PC-9 (cell line): ENCODE measurements at regions of chr6 and their contacts with region 1.

Region 1: DNA sequence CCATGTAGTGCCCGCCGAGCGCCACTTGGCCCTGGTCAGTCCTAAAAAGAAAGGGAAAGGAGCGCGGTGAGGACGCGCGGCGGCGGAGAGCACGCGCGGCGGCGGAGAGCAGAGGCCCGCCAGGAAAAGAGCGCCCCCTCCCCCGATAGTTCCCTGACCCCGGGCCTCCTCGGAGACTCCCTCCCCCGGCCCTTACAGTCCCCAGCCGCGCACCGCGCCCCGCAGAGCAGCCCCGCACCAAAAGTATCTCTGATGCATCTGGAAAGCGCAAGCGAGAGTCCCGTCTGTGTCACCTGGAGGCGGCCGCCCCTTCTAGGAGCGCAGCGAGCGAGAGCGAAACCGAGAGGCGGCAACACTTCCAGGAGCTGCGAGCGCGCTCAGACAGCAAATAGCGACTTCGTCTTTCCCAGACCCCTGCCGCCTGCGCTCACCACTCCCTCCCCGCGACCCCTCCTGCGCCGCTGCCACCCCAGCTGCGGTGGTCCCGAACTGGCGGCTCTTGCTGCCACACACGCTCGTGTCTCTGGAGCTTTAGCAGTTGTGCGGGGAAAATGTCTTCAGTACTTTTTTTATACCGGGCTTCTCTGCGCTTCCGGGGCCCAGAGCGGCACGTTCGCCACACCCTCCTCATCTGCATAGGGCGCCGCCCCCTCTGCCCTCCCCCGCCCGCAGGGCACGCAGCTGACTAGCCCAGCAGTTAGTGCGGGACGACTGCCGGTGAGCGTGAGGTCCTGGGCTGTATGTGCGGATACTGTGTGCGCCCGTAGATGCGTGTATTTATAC is at the start of gene TENT5A:
- DNase-seq: peak; percentile 74 to 87
- H3K4me3 ChIP-seq: peak within 1 kb of the TSS; percentile 88
- H3K27ac ChIP-seq: peak within 1 kb of the TSS; percentile 72
- H3K4me1 ChIP-seq: 0 out of 2 replicates have a peak, but pooled peaks cover 4% of the 10 kb centered on the region
- H3K27me3 ChIP-seq: no peaks in the 10 kb centered on the region
- CTCF ChIP-seq: no peak
- total RNA-seq, gene TENT5A: 2.0 and 2.2 TPM in 2 replicates

Region 2: DNA sequence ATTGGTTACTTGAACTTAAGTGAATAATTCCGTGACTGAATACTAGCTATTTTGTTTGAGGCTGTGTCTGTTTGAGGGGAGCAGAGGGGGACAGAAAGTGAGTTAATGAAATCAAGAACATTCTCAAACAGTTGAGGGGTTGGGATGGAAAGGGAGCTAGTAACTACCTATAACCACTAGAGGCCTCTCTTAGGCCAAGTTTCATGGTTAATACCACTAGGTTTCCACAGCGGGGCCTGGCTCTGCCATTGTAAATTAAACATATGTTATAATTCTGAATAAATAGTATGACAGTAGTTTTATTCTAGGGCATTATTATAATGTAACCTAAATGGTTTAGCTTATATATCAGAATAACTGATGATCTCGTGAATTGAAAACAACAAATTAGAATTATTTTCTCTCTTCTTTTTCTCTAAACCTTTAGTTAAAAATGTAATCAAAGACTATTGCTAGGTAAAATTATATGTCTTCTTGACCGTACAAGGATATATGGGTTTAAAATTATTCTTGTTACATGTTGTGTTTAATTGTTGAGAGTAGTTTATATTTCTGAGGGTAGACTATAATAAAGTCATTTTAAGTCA is 1537.8 kb before region 1 on chr6:
- CTCF ChIA-PET with region 1: interaction called, 3 read pairs
- POLR2A ChIA-PET with region 1: no interaction called
- intact Hi-C with region 1: loop called (anchors 1 kb)
- DNase-seq: peak in 1 of 2 experiments; percentile 7
- H3K4me3 ChIP-seq: no peak overlapping the region
- H3K27ac ChIP-seq: no peak overlapping the region
- H3K4me1 ChIP-seq: 0 out of 2 replicates have a peak, but pooled peaks cover 7% of the 10 kb centered on the region
- H3K27me3 ChIP-seq: no peaks in the 10 kb centered on the region
- CTCF ChIP-seq: peak; percentile 73

Region 3: GRCh38 chr6:80742481-80742880 is 1009.8 kb before region 1 on chr6:
- CTCF ChIA-PET with region 1: no interaction called
- POLR2A ChIA-PET with region 1: no interaction called
- intact Hi-C with region 1: loop called (anchors 2 kb)
- DNase-seq: no peak
- H3K4me3 ChIP-seq: no peak overlapping the region
- H3K27ac ChIP-seq: no peak overlapping the region
- H3K4me1 ChIP-seq: no peaks in the 10 kb centered on the region
- H3K27me3 ChIP-seq: no peaks in the 10 kb centered on the region
- CTCF ChIP-seq: peak; percentile 56

Region 4: GRCh38 chr6:81562169-81562568 is 190.2 kb before region 1 on chr6:
- CTCF ChIA-PET with region 1: no interaction called
- POLR2A ChIA-PET with region 1: no interaction called
- intact Hi-C with region 1: loop called (anchors 10 kb)
- DNase-seq: no peak
- H3K4me3 ChIP-seq: no peak overlapping the region
- H3K27ac ChIP-seq: no peak overlapping the region
- H3K4me1 ChIP-seq: peaks cover 17% of the 10 kb centered on the region
- H3K27me3 ChIP-seq: no peaks in the 10 kb centered on the region
- CTCF ChIP-seq: no peak

Region 5: GRCh38 chr6:81894788-81895271 is 142.5 kb after region 1 on chr6:
- CTCF ChIA-PET with region 1: no interaction called
- POLR2A ChIA-PET with region 1: no interaction called
- intact Hi-C with region 1: loop called (anchors 5 kb)
- DNase-seq: no peak
- H3K4me3 ChIP-seq: no peak overlapping the region
- H3K27ac ChIP-seq: peak overlapping the region; percentile 53
- H3K4me1 ChIP-seq: peaks cover 30% of the 10 kb centered on the region
- H3K27me3 ChIP-seq: no peaks in the 10 kb centered on the region
- CTCF ChIP-seq: no peak

Region 6: GRCh38 chr6:82006027-82006738 is 253.9 kb after region 1 on chr6:
- CTCF ChIA-PET with region 1: interaction called, 4 read pairs
- POLR2A ChIA-PET with region 1: no interaction called
- intact Hi-C with region 1: loop called (anchors 2 kb)
- DNase-seq: no peak
- H3K4me3 ChIP-seq: no peak overlapping the region
- H3K27ac ChIP-seq: no peak overlapping the region
- H3K4me1 ChIP-seq: no peaks in the 10 kb centered on the region
- H3K27me3 ChIP-seq: no peaks in the 10 kb centered on the region
- CTCF ChIP-seq: peak; percentile 75

Region 7: DNA sequence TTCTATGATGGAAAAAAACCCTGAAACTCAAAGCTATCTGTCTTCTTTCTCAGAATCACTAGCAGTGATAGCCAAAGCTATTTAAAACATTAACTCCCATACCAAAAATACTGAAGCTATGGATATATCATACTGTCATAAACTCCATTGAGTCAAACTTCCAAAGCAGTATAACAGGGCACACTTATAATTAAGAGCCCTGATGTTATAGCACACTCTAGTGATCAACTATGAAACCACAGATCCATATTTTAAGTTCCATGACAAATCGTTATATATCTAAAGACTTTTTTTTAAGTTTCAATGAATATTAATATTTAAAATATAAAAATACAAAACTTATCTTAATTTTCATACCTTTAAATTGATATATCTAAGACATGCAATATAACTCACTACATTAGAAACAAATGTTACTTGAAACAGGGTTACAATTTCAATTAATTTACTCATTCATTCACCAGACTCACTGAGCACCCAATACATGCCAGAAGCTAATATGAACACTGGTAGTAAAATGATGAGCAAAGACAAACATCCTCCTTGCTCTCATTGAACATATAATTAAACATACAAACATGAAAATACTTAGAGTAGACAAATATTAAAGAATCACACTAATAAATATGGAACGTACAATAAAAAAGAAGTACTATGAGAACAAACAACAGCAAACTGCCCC is 425.9 kb after region 1 on chr6:
- CTCF ChIA-PET with region 1: no interaction called
- POLR2A ChIA-PET with region 1: no interaction called
- intact Hi-C with region 1: loop called (anchors 2 kb)
- DNase-seq: no peak
- H3K4me3 ChIP-seq: no peak overlapping the region
- H3K27ac ChIP-seq: no peak overlapping the region
- H3K4me1 ChIP-seq: no peaks in the 10 kb centered on the region
- H3K27me3 ChIP-seq: no peaks in the 10 kb centered on the region
- CTCF ChIP-seq: peak; percentile 48